Endothelial cell of umbilical vein (primary cell): ENCODE measurements at regions of chr6 and their contacts with region 1.

Region 1: DNA sequence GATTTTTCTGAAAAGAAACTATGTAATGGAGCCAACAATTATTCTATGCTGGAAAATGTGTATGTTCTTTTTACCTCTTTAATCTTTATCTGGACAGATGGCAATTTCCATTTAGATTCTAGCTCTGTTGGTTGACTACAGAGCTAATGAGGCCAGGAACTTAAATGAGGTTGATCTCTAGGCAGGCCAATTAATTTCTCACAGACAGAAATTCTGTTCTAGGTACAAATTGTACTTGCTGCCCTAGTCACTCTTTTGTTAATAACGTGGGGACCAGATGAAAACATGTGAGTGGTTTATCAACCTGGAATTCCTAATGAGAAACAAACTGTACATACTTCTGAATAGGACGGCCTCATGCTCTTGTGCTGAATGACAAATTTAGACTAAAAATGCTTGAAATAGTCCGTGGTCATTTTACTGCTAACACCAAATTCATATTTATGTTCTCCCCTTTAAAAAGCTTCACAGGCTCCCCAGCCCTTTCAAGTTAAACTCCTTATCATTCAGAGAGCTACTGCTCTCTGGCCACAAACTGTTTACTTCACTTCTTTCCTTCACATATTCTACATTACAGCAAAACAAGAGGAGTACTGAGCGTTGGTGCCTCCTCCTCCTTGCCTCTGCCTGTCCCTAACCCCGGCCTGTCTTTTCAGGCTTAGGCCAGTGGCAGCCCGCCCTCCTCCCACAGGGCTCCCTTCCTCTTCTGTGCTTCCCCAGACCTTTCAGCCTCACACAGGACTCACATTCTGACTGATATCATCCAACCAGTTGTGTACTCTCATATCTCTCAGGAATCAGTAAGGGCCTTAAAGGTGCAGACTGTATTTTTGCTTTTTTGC is 41.4 kb downstream of the DTNBP1 start:
- DNase-seq: peak; percentile 20
- H3K4me3 ChIP-seq: no peak overlapping the region
- H3K27ac ChIP-seq: no peak overlapping the region
- H3K4me1 ChIP-seq: no peaks in the 10 kb centered on the region
- H3K27me3 ChIP-seq: no peaks in the 10 kb centered on the region
- CTCF ChIP-seq: no peak
- POLR2A ChIP-seq: no peak

Region 2: GRCh38 chr6:14129575-14129974 is 1491.8 kb before region 1 on chr6:
- CTCF ChIA-PET with region 1: interaction called, 17 read pairs
- POLR2A ChIA-PET with region 1: no interaction called
- dilution Hi-C with region 1: no loop called
- intact Hi-C with region 1: no loop called
- DNase-seq: peak; percentile 40
- H3K4me3 ChIP-seq: no peak overlapping the region
- H3K27ac ChIP-seq: no peak overlapping the region
- H3K4me1 ChIP-seq: no peaks in the 10 kb centered on the region
- H3K27me3 ChIP-seq: no peaks in the 10 kb centered on the region
- CTCF ChIP-seq: peak; percentile 20 to 50
- POLR2A ChIP-seq: no peak

Region 3: DNA sequence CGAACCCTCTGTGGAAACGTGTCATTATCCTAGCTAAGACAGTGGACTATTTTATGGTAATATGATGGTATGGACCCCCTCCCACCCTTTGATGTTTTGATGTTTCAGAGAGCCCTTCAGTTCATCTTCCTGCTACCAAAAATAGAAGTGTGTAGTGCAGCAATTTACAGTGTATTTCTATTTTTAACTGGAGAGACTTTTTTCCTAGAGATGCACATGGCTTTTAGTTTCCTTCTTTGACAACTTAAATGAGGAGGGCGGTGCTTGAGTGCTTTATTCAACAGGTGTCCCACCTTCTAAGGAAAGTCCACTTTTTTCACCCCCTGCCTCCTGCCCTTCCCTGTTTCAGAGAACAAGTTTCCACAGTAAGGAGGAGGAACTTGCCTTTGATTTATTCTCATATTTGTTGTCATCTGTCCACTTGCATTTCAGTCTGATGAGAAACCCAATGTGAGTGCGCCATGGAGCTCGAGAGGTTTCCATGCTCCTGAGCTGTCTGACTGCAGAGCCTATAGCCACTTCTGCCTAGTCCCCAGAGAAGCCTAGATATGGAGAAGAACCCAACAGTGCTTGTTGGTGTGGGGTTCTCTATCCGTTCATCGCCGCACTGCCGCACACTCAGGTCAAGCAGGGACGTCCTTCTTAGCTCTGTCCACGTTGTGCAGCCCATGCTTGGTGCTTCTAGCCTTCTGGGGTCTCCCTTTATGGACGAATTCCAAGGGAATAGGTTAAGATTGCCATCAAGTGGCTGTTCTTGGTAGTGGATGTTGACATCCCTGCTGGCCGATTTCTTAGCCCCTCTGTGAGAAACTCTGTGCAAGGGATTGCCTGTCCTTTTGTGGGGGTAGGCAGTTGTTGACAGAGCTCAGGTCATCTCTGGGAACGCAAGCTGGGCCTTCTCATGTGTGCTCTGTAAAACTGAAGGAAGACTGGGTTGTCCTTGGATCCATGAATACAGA is 231.4 kb before region 1 on chr6:
- CTCF ChIA-PET with region 1: interaction called, 5 read pairs
- POLR2A ChIA-PET with region 1: no interaction called
- dilution Hi-C with region 1: no loop called
- intact Hi-C with region 1: loop called (anchors 1 kb)
- DNase-seq: peak; percentile 73
- H3K4me3 ChIP-seq: no peak overlapping the region
- H3K27ac ChIP-seq: no peak overlapping the region
- H3K4me1 ChIP-seq: no peaks in the 10 kb centered on the region
- H3K27me3 ChIP-seq: no peaks in the 10 kb centered on the region
- CTCF ChIP-seq: peak; percentile 60 to 71
- POLR2A ChIP-seq: no peak

Region 4: GRCh38 chr6:15491255-15491985 is 130.0 kb before region 1 on chr6:
- CTCF ChIA-PET with region 1: interaction called, 4 read pairs
- POLR2A ChIA-PET with region 1: no interaction called
- dilution Hi-C with region 1: no loop called
- intact Hi-C with region 1: loop called (anchors 1 kb)
- DNase-seq: peak; percentile 54
- H3K4me3 ChIP-seq: no peak overlapping the region
- H3K27ac ChIP-seq: no peak overlapping the region
- H3K4me1 ChIP-seq: no peaks in the 10 kb centered on the region
- H3K27me3 ChIP-seq: no peaks in the 10 kb centered on the region
- CTCF ChIP-seq: peak; percentile 84 to 90
- POLR2A ChIP-seq: no peak

Region 5: GRCh38 chr6:15551798-15552197 is 69.6 kb before region 1 on chr6:
- CTCF ChIA-PET with region 1: interaction called, 6 read pairs
- POLR2A ChIA-PET with region 1: no interaction called
- dilution Hi-C with region 1: no loop called
- intact Hi-C with region 1: loop called (anchors 2 kb)
- DNase-seq: peak; percentile 92
- H3K4me3 ChIP-seq: no peak overlapping the region
- H3K27ac ChIP-seq: peak overlapping the region; percentile 62
- H3K4me1 ChIP-seq: peaks cover 42% of the 10 kb centered on the region
- H3K27me3 ChIP-seq: no peaks in the 10 kb centered on the region
- CTCF ChIP-seq: no peak
- POLR2A ChIP-seq: no peak

Region 6: DNA sequence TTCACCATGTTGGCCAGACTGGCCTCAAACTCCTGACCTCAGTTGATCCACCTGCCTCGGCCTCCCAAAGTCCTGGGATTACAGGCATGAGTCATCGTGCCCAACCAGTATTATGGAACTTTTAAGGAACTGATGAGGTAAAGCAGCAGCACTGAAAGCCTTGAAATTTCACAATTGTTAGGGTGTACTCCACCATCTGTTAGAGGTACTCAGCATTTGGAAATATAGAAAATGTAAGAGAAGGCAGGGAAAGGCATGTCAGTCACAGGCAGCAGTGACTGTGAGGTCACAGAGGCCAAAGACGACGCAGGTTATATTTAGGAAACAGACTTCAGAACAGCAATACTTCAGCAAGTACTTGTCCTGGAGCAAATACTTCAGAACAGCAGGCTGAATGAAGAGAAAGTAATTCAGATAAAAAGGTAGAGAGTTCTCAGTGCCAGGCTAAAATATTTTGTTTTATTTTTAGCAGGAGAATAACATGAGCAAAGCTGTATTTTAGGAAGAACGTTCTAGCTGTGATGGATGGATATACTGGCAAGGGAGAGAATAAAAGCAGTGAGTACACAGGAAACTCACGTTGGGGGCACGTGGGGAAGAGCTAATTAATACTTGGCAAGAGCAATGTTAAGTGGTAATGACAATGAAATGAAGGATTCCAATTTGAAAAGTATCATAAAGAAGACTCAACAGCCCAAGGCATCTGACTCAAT is 25.8 kb before region 1 on chr6:
- CTCF ChIA-PET with region 1: no interaction called
- POLR2A ChIA-PET with region 1: no interaction called
- dilution Hi-C with region 1: no loop called
- intact Hi-C with region 1: no loop called
- DNase-seq: no peak
- H3K4me3 ChIP-seq: no peak overlapping the region
- H3K27ac ChIP-seq: no peak overlapping the region
- H3K4me1 ChIP-seq: no peaks in the 10 kb centered on the region
- H3K27me3 ChIP-seq: no peaks in the 10 kb centered on the region
- CTCF ChIP-seq: no peak
- POLR2A ChIP-seq: no peak

Region 7: DNA sequence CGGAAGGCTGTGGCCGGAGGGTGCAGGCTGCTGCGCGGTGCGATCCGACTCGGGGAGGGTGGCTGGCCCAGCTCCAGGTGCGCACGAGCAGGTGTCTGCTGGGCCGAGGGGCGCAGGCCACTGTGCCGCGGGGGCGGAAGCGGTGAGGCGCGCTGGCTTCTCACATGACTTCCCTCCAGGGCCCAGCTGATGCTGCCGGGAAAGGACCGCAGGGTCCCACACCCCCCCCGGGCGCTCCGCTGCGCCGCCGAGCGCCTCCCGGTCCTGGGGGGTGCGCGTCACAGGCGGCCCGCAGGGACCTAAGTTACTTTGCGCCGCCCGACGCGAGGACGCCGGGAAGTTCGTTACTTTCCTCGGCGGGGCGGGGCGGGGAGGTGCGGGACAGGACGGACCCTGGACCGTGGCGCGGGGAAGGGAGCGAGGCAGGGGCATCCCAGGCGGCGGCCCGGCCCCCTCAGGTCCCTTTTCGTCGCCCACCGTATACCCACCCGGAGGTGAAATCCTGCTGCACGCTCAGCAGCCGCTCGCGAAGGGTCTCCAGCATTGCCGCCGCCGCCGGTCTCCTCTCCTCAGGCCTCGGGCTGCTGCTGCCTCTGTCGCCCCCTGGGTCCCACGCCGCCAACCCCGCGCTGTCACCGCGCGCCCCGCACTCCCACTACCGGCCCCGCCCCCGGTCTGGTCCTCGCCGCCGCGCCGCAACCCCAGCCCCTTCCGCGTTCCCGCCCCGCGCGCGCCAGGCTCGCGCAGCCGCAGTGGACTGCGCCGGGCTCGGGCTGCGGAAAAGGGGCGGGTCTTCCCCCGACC is 41.1 kb after region 1 on chr6 and contains the start of gene DTNBP1:
- CTCF ChIA-PET with region 1: no interaction called
- POLR2A ChIA-PET with region 1: no interaction called
- dilution Hi-C with region 1: no loop called
- intact Hi-C with region 1: no loop called
- DNase-seq: peak; percentile 79
- H3K4me3 ChIP-seq: peak within 1 kb of the TSS; percentile 62 to 78 (median 71)
- H3K27ac ChIP-seq: peak within 1 kb of the TSS; percentile 3
- H3K4me1 ChIP-seq: peaks cover 6% of the 10 kb centered on the region
- H3K27me3 ChIP-seq: peaks cover 3 to 7% of the 10 kb centered on the region in 2 experiments
- CTCF ChIP-seq: no peak
- POLR2A ChIP-seq: peak; percentile 42
- total RNA-seq, gene DTNBP1: 21.8 and 24.3 TPM in 2 replicates

Region 8: DNA sequence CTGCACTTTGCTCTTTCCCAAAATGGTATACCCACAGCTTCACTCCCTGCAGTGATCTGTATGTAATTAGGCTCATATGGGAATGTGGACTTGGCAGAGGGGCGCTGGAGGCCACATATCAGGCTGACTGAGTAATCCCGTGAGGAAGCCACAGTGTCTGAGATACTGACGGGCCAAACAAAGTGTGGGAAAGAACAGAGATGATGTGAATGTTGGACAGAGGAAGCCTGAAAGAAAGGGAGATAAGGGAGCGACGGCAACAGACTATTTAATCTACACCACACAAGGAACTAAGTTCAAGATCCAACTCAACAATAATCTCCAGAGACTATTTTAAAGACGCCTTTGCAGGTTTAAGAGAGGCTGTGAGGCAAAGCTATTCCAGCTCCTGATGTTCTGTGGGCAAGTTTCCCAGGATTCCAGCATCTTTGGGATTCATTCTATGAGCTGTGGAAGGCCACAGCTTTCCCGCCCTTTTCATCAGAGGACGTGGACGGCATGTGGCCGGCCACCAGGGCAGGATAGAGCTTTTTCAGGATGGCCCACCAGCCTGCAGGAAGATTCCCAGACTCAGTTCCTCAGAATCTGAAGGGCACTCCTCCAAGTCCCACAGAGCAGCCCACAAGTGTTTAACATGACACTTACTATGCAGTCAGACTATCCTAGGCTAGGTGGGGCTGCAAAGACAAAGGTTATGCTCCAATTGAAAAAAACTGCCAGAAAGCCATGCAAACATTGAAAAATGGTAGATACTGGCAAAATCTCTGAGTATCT is 902.4 kb after region 1 on chr6:
- CTCF ChIA-PET with region 1: no interaction called
- POLR2A ChIA-PET with region 1: no interaction called
- dilution Hi-C with region 1: no loop called
- intact Hi-C with region 1: no loop called
- DNase-seq: peak; percentile 95
- H3K4me3 ChIP-seq: no peak overlapping the region
- H3K27ac ChIP-seq: peak overlapping the region; percentile 40
- H3K4me1 ChIP-seq: peaks cover 2% of the 10 kb centered on the region
- H3K27me3 ChIP-seq: no peaks in the 10 kb centered on the region
- CTCF ChIP-seq: no peak
- POLR2A ChIP-seq: no peak